Activated T-helper 1 cell treated with anti-CD3 and anti-CD28 coated beads, Interleukin-12 subunit alpha, Interleukin-12 subunit beta, Interleukin-2, Interleukin-4 antibody, amounts not matched to agents 30 ng/mL and 10 ng/mL and 1 ng/mL, durations not matched to agents 14 hours and 24 hours and 36 hours (primary cell): ENCODE measurements at regions of chr22 and their contacts with region 1.

Region 1: GRCh38 chr22:36239401-36240171 is at the start of gene APOL2:
- DNase-seq: peak; percentile 84
- H3K4me3 Mint-ChIP-seq: peak within 1 kb of the TSS; percentile 99
- H3K27ac Mint-ChIP-seq: peak within 1 kb of the TSS; percentile 97
- H3K4me1 Mint-ChIP-seq: peaks cover 54% of the 10 kb centered on the region
- H3K27me3 Mint-ChIP-seq: no peaks in the 10 kb centered on the region
- total RNA-seq, gene APOL2: 54.4 and 62.2 TPM in 2 replicates

Region 2: GRCh38 chr22:36065775-36066559 is 173.6 kb before region 1 on chr22:
- intact Hi-C with region 1: loop called (anchors 10 kb)
- DNase-seq: peak; percentile 49
- H3K4me3 Mint-ChIP-seq: peak overlapping the region; percentile 84
- H3K27ac Mint-ChIP-seq: peak overlapping the region; percentile 83
- H3K4me1 Mint-ChIP-seq: peaks cover 11% of the 10 kb centered on the region
- H3K27me3 Mint-ChIP-seq: peaks cover 21% of the 10 kb centered on the region

Region 3: GRCh38 chr22:36253518-36254490 is 14.2 kb after region 1 on chr22:
- intact Hi-C with region 1: loop called (anchors 1 kb)
- DNase-seq: no peak
- H3K4me3 Mint-ChIP-seq: peak overlapping the region; percentile 93
- H3K27ac Mint-ChIP-seq: peak overlapping the region; percentile 83
- H3K4me1 Mint-ChIP-seq: peaks cover 69% of the 10 kb centered on the region
- H3K27me3 Mint-ChIP-seq: no peaks in the 10 kb centered on the region

Region 4: DNA sequence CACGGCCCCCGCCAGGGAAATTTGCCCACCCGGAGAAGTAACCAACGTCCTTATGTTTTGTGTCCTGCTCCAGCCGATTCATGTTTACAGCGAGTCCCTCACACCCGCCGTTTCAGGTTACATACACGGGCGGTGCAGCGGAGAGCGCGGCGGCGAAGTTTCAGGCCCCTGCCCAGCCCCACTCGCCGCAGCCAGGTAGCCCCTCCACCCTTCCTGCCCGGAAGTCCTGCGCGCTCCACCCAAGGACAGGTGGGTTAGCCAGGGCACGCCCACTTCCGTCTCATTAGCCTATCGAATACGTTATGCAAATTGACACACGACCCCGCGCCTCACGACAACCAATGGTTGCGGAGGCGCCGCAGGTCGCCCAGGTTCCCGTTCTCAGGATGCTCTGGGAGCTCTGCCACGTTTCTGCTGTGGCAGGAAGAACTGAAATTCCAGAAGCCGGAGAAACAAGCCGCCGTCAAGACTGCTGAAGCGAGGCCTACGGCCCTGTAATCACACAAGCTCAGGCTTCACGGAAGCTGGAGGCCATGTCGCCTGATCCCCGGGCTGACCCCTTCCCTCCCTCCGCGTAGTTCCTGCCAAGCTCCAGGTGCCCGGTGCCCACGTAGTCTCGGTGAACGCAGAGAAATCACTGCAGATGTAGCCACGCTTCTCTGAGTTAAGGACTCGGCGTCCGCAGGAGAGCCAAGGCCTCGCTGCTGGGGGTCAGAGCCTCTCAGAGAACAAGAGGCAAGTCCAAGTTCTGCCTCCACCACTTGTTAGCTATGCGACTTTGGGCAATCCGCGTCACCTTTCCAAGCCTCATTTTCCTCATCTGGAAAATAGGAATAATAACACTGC is 170.5 kb after region 1 on chr22:
- intact Hi-C with region 1: no loop called
- DNase-seq: peak; percentile 52
- H3K4me3 Mint-ChIP-seq: peak overlapping the region; percentile 68
- H3K27ac Mint-ChIP-seq: peak overlapping the region; percentile 71
- H3K4me1 Mint-ChIP-seq: peaks cover 32% of the 10 kb centered on the region
- H3K27me3 Mint-ChIP-seq: no peaks in the 10 kb centered on the region

Region 5: DNA sequence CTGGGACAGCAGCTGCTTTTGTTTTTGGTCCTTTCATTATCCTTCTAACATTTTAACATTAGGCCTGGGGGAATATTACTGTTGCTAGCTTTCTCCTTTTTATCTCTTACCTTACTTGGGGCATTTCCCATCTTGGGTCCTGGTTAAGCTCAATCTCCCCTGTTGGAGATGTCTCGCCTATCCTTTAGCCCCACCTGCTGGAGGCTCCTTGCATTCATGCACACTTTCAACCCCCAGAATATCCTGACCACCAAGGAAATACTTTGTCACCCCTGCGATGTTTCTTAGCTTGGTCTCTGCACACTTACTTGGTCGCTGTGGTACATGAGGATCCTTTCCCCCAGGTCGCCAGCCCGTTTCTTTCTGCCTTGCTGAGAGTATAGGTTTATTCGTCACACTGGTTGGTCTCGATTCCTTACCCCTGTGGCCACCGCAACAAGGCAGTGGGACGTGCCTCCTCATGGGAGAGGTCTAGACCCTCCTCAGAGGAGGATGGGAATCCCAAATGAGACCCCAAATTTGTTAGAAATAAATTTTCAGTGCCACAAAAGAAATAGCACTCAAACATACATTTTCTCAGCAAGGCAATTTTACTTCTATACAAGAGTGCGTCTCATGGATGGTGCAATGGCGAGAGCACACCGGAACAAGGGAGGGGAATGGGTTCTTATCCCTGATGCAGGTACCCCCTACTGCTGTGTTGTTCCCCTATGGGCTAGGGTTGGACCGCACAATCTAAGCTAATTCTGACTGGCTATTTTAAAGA is 247.2 kb after region 1 on chr22:
- intact Hi-C with region 1: loop called (anchors 1 kb)
- DNase-seq: peak; percentile 39
- H3K4me3 Mint-ChIP-seq: no peak overlapping the region
- H3K27ac Mint-ChIP-seq: no peak overlapping the region
- H3K4me1 Mint-ChIP-seq: peaks cover 6% of the 10 kb centered on the region
- H3K27me3 Mint-ChIP-seq: no peaks in the 10 kb centered on the region

Region 6: DNA sequence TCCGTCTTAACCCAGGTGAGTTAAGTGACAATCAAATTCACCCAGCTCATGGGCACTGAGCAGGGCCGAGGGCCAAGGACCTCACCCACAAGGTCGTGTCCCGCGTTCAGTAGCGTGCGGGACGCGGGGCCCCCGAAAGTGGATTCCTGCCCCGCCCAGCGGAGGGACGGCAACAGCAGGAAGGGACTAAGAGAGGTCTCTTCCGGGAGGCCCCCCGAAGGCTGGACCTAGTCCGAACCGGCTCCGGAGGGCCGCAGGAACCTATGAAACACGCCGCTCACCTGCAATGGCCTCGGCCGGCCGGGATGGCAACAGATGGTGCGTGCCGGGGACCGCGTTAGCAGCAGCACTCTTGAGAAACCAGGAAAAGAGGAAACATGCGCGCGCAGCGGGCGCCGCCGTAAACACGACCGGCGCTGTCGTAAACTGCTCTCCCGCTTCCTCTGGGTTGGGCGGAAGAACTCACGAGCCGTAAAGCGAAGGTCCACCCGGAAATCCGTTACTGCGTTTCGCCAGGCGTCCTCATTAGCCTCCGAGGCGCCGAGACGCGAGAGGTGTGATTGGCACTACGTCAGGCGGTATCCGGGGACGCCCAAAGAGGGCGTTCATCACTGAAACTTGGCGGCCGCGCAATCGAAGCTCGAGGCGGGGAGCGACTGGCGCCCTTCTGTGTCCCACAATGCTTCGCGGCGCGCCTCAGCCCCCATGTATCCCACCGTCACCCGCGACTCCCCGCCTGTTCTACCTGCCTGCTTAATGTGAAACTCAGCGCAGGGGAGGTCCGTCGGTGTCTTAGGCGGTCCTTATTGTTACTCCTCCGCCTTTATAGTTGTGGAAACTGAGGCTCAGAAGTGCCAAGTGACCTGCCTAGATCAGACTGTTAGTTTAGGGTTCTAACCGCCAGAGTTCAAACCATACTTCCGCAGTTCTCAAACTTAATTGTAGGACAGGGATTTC is 289.5 kb after region 1 on chr22 and contains the start of gene EIF3D:
- intact Hi-C with region 1: loop called (anchors 2 kb)
- DNase-seq: peak; percentile 99
- H3K4me3 Mint-ChIP-seq: peak within 1 kb of the TSS; percentile 96
- H3K27ac Mint-ChIP-seq: peak within 1 kb of the TSS; percentile 99
- H3K4me1 Mint-ChIP-seq: peaks cover 24% of the 10 kb centered on the region
- H3K27me3 Mint-ChIP-seq: peaks cover 2% of the 10 kb centered on the region
- total RNA-seq, gene EIF3D: 322 and 323 TPM in 2 replicates